Heart right ventricle (tissue), 16 donors: ENCODE measurements at regions of chr1 and their contacts with region 1.

Region 1: GRCh38 chr1:30379684-30380624 is 343.4 kb downstream of the MATN1 start:
- DNase-seq: peak in 1 of 2 donors; percentile 69
- ATAC-seq: peak; percentile 59 to 80 (median 68)
- H3K4me3 ChIP-seq: no peak overlapping the region
- H3K27ac ChIP-seq: no peak overlapping the region
- H3K4me1 ChIP-seq: peaks cover 0 to 9% (median 3%) of the 10 kb centered on the region in 9 donors
- H3K27me3 ChIP-seq: peaks cover 0 to 42% (median 34%) of the 10 kb centered on the region in 7 donors
- CTCF ChIP-seq: peak; percentile 76 to 89 (median 85)

Region 2: GRCh38 chr1:29235955-29236684 is 1143.8 kb before region 1 on chr1 and contains the start of gene PTPRU:
- intact Hi-C with region 1: loop called in 9 of 10 experiments (anchors 1 to 10 kb)
- DNase-seq: peak; percentile 72 to 83
- ATAC-seq: peak; percentile 69 to 89 (median 80)
- H3K4me3 ChIP-seq: peak within 1 kb of the TSS; percentile 52 to 82 (median 66)
- H3K27ac ChIP-seq: peak within 1 kb of the TSS in 8 of 10 donors; percentile 13 to 73 (median 54)
- H3K4me1 ChIP-seq: peaks cover 5 to 30% (median 21%) of the 10 kb centered on the region in 9 donors
- H3K27me3 ChIP-seq: peaks cover 0 to 51% (median 0%) of the 10 kb centered on the region in 7 donors
- CTCF ChIP-seq: peak; percentile 63 to 99 (median 82)
- total RNA-seq, gene PTPRU: 8.6 to 29.8 (median 14.5) TPM

Region 3: GRCh38 chr1:29793101-29793546 is 586.8 kb before region 1 on chr1:
- intact Hi-C with region 1: loop called in 4 of 10 experiments (anchors 2 to 10 kb)
- DNase-seq: peak; percentile 71 to 78
- ATAC-seq: peak; percentile 55 to 87 (median 79)
- H3K4me3 ChIP-seq: no peak overlapping the region
- H3K27ac ChIP-seq: no peak overlapping the region
- H3K4me1 ChIP-seq: no peaks in the 10 kb centered on the region
- H3K27me3 ChIP-seq: peaks cover 0 to 16% (median 0%) of the 10 kb centered on the region in 7 donors
- CTCF ChIP-seq: peak; percentile 63 to 85 (median 81)

Region 4: DNA sequence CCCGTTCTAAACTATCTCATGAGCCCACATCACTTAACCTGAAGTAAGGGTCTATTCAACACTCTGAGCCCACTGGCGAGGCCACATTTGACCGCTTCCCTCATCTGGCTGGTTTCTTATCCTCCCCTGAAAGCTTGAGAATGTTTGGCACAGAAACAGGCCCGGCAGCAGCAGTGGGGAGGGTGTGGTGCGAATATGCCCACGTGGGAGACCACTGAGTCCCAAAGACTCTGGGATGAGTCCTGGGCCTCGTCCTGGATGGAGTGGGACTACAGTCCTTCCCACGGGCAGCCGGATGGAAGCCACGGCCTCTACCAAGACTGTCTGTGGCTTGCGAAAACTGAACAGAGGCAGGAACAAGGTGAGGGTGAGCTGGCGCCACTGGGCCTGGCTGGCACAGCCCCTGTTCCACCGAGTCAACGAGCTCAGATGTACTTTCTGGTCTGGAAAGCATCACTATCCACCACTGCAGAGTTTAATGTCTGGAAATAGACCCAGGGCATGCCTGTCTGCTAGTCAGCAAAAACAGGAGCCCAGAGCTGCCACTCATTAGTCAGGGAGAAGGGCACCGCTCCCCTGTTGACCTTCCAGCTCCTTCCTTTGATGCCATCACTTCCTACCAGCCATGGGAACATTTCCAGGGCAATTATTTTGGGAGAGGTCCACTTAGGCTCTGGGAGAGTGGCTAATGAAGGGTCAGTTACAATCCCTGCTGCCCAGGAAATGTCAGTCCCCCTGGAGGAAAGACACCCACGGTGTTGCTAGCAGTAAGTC is 43.2 kb before region 1 on chr1:
- intact Hi-C with region 1: no loop called
- DNase-seq: no peak
- ATAC-seq: peak in 5 of 8 donors; percentile 25 to 92 (median 80)
- H3K4me3 ChIP-seq: no peak overlapping the region
- H3K27ac ChIP-seq: peak overlapping the region in 3 of 10 donors; percentile 28 to 76 (median 38)
- H3K4me1 ChIP-seq: peaks cover 0 to 5% (median 0%) of the 10 kb centered on the region in 9 donors
- H3K27me3 ChIP-seq: peaks cover 0 to 16% (median 14%) of the 10 kb centered on the region in 7 donors
- CTCF ChIP-seq: no peak